ENCODE measurements at regions of chr12 and their contacts with region 1.

Region 1: DNA sequence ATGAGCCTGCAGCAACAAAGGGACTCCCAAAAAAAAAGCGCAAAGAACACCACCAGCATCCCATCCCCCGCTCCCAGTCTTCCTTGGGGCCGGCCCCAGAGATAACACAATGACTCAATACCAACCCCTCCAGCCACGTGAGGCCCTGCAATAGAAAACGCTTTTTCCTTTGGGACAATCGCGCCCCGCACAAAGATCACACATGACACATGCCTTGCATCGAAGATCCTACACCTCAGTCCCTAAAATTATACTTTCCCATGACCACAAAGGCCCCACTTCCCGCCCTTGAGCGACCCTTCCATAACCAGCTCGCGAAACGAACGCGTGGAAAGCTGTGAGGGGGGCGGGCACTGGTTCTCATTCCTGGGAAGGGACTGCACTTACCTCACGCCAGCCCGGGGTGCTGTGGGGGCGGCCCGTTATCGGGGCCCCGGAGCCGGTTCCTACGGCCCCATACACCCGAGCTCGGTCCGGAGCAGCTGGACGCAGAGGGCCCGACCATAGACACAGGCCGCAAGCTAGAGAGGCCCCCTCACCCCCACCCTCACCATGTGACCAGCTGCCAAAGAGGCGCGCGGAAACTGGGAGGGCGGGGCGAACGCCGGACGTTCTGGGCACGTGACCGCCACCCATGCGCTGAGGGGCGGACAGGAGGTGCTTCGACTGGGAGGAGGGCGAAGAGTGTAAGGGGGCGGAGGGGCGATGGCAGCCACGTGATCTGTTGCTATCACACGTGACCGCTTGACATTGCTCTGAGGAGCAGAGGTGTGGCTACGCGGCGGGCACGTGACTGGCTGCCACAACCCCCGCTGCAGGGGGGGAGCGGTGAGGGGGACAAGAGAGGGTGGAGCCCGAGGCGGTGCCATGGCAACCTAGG is at the start of gene CDK4:
- DNase-seq: peak; percentile 97 to 100 (median 98)
- ATAC-seq: peak; percentile 75
- H3K4me3 ChIP-seq: peak within 1 kb of the TSS; percentile 66
- H3K4me3 Mint-ChIP-seq: peak within 1 kb of the TSS; percentile 89
- H3K27ac ChIP-seq: peak within 1 kb of the TSS; percentile 74 to 86
- H3K27ac Mint-ChIP-seq: peak within 1 kb of the TSS; percentile 87
- H3K4me1 ChIP-seq: peaks cover 54% of the 10 kb centered on the region
- H3K4me1 Mint-ChIP-seq: peaks cover 62% of the 10 kb centered on the region
- H3K27me3 ChIP-seq: no peaks in the 10 kb centered on the region
- H3K27me3 Mint-ChIP-seq: no peaks in the 10 kb centered on the region
- CTCF ChIP-seq: no peak
- total RNA-seq, gene CDK4: 8.7 to 10.8 TPM

Region 2: DNA sequence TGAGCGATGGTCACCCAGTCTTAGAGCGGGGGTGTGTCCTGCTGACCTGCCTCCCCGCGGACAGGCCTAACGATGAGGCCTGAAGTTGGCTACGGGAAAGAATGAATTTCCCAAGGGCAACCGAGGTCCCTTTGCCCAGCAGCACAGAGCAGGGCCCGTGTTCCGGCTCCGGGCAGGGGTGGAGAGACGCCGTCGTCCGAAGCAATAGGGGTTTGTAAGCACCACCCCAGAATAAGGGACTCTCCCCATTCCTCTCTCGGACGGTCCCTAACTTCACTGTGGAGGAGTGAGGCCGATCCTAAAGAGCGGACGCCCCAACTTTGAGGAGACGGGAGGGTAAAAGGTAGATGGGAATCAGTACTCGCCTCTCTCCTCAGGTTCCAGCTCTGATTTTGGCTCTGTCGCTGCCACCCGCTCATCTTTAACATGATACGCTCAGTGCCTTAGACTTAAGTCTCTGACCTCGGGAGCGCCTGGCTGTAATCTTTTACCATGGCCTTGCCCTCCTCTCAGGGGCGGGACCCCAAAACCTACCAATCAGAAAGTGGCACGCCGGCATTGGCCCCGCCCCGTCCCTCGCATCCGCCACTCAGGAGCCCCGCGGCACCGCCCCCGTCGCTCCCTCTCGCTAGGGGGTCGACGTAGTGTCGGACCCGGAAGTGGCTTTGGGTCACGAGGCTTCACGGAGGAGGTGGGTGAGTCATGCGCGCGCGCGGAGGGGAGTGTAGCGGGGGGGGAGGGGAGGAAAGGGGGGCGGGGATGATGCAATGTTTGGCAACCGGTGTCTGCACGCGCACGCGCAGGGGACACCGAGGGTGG is 231.8 kb before region 1 on chr12 and contains the start of gene DDIT3:
- CTCF ChIA-PET with region 1: no interaction called
- POLR2A ChIA-PET with region 1: interaction called, 3 read pairs
- intact Hi-C with region 1: loop called in 1 of 2 experiments (anchors 5 kb)
- DNase-seq: peak; percentile 98 to 100 (median 99)
- ATAC-seq: peak; percentile 78
- H3K4me3 ChIP-seq: peak within 1 kb of the TSS; percentile 100
- H3K4me3 Mint-ChIP-seq: peak within 1 kb of the TSS; percentile 95
- H3K27ac ChIP-seq: peak within 1 kb of the TSS; percentile 97 to 99
- H3K27ac Mint-ChIP-seq: peak within 1 kb of the TSS; percentile 100
- H3K4me1 ChIP-seq: peaks cover 67% of the 10 kb centered on the region
- H3K4me1 Mint-ChIP-seq: peaks cover 64% of the 10 kb centered on the region
- H3K27me3 ChIP-seq: no peaks in the 10 kb centered on the region
- H3K27me3 Mint-ChIP-seq: no peaks in the 10 kb centered on the region
- CTCF ChIP-seq: no peak
- total RNA-seq, gene DDIT3: 145 TPM

Region 3: DNA sequence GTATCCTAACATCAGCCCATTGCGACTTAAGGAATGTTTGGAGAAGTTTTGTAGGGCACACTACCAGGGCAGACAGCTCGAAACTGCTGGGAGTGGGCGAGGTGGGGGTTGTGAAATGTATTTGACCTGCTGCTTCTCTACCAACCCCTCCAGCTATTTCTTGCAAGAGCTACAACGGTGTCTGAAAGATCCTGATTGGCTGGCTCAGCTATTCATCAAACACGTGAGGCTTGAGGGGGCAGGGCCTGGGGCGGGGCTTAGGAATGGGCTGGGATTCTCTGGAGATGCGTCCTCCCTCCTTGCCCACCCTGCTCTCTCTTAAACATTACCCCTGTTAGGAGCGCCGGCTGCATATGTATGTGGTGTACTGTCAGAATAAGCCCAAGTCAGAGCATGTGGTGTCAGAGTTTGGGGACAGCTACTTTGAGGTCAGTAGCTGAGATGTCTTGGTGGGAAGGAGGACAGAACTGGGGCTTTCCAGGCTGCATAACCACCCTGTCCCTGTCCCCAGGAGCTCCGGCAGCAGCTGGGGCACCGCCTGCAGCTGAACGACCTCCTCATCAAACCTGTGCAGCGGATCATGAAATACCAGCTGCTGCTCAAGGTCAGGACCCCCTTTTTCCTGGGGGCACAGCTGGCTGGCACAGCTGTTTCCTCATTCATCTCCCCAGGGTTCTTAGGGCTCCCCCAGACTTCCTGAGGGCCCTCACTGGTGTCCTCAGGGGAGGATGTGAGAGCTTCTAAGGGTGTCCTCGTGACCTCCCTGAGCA is 137.7 kb before region 1 on chr12:
- CTCF ChIA-PET with region 1: no interaction called
- POLR2A ChIA-PET with region 1: no interaction called
- intact Hi-C with region 1: no loop called
- DNase-seq: peak in 1 of 14 experiments; percentile 30
- ATAC-seq: no peak
- H3K4me3 ChIP-seq: no peak overlapping the region
- H3K4me3 Mint-ChIP-seq: peak overlapping the region; percentile 11
- H3K27ac ChIP-seq: no peak overlapping the region
- H3K27ac Mint-ChIP-seq: no peak overlapping the region
- H3K4me1 ChIP-seq: peaks cover 23% of the 10 kb centered on the region
- H3K4me1 Mint-ChIP-seq: peaks cover 23% of the 10 kb centered on the region
- H3K27me3 ChIP-seq: peaks cover 33 to 52% of the 10 kb centered on the region in 2 experiments
- H3K27me3 Mint-ChIP-seq: peaks cover 81% of the 10 kb centered on the region
- CTCF ChIP-seq: no peak

Region 4: GRCh38 chr12:57771708-57772428 is 19.8 kb after region 1 on chr12 and contains the start of gene METTL1:
- CTCF ChIA-PET with region 1: interaction called, 18 read pairs
- POLR2A ChIA-PET with region 1: interaction called, 14 read pairs
- intact Hi-C with region 1: loop called in 1 of 2 experiments (anchors 1 kb)
- DNase-seq: peak; percentile 73 to 95 (median 83)
- ATAC-seq: peak; percentile 90
- H3K4me3 ChIP-seq: peak within 1 kb of the TSS; percentile 63
- H3K4me3 Mint-ChIP-seq: peak within 1 kb of the TSS; percentile 94
- H3K27ac ChIP-seq: peak within 1 kb of the TSS; percentile 79 to 85
- H3K27ac Mint-ChIP-seq: peak within 1 kb of the TSS; percentile 93
- H3K4me1 ChIP-seq: peaks cover 30% of the 10 kb centered on the region
- H3K4me1 Mint-ChIP-seq: peaks cover 16% of the 10 kb centered on the region
- H3K27me3 ChIP-seq: peaks cover under 1 to 9% of the 10 kb centered on the region in 2 experiments
- H3K27me3 Mint-ChIP-seq: no peaks in the 10 kb centered on the region
- CTCF ChIP-seq: no peak
- total RNA-seq, gene METTL1: 9.3 to 12.0 TPM

Region 5: DNA sequence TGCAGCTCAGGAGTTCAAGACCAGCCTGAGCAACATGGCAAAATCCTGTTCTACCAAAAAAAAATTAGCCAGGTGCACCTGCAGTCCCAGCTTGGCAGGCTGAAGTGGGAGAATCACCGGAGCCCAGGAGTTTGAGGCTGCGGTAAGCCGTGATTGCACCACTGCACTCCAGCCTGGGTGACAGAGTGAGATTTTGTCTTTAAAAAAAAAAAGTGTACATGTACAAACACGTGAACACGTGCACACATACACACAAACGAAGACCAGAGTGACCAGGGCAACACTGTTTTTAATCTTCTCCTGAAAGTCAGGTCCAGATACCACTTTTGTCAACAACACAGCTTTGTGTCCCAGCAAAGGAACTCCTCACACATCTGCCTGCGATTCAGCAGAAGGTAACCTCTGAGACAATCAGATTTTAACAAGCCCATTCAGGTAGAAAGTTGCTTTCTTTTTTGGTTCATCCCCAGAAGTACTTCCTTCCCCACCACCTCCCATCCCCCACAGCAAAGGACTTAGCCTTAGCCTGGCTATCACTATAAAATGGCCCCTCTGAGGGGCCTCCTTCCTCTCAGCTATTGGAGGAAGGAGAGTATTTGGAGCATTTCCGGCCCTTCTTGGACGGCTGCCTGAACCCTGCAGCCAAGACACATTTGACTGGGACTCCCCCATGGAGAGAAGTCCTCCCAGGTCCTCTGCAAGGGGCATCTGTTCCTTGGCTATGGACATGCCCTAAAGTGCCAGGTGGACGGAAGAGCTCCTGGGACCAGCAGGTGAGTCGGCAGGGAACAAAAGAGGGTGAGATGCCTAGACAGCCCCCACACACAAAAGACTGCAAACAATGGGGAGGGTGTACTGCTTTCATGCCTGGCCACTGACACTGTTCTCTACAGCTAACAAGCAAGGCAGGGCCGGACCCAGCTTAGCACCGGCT is 84.7 kb after region 1 on chr12:
- CTCF ChIA-PET with region 1: interaction called, 4 read pairs
- POLR2A ChIA-PET with region 1: no interaction called
- intact Hi-C with region 1: loop called in 1 of 2 experiments (anchors 5 kb)
- DNase-seq: peak in 6 of 14 experiments; percentile 26 to 73 (median 54)
- ATAC-seq: peak; percentile 15
- H3K4me3 ChIP-seq: peak overlapping the region; percentile 31
- H3K4me3 Mint-ChIP-seq: peak overlapping the region; percentile 74
- H3K27ac ChIP-seq: peak overlapping the region; percentile 71 to 79
- H3K27ac Mint-ChIP-seq: peak overlapping the region; percentile 92
- H3K4me1 ChIP-seq: peaks cover 99% of the 10 kb centered on the region
- H3K4me1 Mint-ChIP-seq: peaks cover 98% of the 10 kb centered on the region
- H3K27me3 ChIP-seq: no peaks in the 10 kb centered on the region
- H3K27me3 Mint-ChIP-seq: no peaks in the 10 kb centered on the region
- CTCF ChIP-seq: no peak